ENCODE measurements at regions of chr14 and their contacts with region 1.

Region 1: DNA sequence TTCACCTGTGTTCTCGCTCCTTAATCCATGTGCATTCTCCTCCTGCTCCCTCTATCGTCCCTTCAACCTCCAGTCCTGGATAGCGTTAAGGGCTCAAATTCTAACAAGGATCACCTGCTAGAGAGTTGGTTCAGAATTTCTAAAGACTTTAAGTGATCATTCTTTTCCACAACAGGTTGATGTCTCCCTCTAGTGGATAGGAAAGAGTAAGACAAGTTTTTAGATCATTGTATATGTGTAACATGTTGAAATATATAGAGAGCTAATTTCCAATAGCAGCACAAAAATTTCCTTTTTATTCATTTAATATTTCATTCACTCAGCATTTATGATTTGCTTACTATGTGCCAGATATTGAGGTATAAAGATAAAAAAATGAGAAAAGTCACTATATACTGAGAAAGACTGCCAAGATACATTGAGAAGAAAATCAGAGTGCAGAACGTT is 9.3 kb upstream of the ESR2 start:
- DNase-seq: no peak
- H3K4me3 ChIP-seq: no peak overlapping the region
- H3K27ac ChIP-seq: no peak overlapping the region
- H3K4me1 ChIP-seq: no peaks in the 10 kb centered on the region
- H3K27me3 ChIP-seq: no peaks in the 10 kb centered on the region
- CTCF ChIP-seq: peak; percentile 45 to 85 (median 77)

Region 2: DNA sequence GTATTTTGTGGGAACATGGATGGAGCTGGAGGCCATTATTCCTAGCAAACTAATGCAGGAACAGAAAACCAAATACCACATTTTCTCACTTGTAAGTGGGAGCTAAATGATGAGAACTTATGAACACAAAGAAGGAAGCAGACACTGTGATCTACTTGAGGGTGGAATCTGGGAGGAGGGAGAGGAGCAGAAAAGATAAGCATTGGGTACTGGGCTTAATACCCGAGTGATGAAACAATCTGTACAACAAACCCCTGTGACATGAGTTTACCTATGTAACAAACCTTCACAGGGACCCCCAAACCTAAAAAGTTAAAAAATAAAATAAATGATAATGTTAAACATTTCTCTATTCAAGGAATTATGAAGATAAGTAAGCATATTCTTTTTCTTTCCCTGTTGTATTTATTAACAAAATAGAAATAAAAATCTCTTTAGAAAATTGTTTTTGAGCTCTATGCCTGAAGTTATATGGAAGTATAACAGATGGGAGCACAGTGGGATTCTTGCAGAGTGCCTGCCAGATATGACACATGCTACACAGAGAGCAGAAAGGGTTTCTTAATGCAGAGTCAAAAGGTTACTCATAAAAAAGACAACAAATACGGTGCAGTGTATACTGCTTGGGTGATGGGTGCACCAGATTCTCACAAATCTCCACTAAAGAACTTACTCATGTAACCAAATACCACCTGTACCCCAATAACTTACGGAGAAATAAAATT is 502.7 kb before region 1 on chr14:
- intact Hi-C with region 1: loop called (anchors 2 kb)
- DNase-seq: no peak
- H3K4me3 ChIP-seq: no peak overlapping the region
- H3K27ac ChIP-seq: no peak overlapping the region
- H3K4me1 ChIP-seq: peaks cover 0 to 4% of the 10 kb centered on the region in 2 donors
- H3K27me3 ChIP-seq: no peaks in the 10 kb centered on the region
- CTCF ChIP-seq: no peak

Region 3: DNA sequence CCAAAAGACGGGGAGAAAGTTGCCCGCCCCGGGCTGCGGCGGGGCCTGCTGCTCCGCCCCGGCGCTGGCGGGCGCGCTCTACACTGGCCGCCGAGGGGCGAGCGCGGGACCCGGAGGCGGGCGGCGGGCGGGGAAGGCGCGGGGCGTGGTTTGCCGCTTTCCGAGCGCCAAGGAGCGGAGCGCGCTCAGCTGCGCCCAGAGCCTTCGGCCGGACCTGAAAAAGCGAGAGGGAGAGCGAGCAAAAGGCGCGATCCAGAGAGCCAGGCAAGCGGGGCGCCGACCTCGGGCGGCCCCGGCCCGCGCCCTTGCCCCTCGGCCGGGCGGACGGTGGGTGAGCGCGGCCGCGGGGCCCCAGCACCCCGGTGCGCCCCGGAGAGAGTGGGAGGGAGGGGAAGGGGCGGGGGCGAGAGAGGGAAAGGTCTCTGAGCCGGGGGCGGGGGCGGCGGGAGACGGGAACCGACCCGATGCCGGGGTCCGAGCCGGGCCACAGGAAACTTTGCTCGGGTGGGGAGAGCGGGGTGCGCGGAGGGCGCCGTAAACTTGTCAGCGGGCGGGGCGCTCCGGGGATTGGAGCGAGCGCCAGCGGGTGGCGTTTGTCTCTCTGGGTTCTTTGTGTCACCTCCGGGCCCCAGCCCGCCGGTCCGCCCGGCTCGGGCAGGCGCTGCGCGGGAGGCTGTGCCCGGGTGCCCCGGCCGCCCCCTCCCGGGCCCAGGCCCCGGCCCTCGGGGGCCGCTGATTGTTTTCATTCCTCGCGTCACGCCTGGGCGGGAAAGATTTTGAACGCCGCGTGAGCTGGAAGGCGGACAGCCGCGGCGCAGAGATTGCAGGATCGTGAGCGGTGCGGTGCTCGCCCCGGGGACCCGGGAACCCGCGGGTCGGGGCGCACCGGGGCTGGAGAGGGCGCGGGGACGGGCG is 450.4 kb before region 1 on chr14 and contains the start of gene SYNE2:
- intact Hi-C with region 1: no loop called
- DNase-seq: peak in 1 of 2 donors; percentile 86
- H3K4me3 ChIP-seq: peak within 1 kb of the TSS; percentile 84 to 89
- H3K27ac ChIP-seq: peak within 1 kb of the TSS; percentile 89 to 93
- H3K4me1 ChIP-seq: peaks cover 0 to 12% of the 10 kb centered on the region in 2 donors
- H3K27me3 ChIP-seq: no peaks in the 10 kb centered on the region
- CTCF ChIP-seq: peak in 2 of 3 experiments; percentile 32 to 56
- total RNA-seq, gene SYNE2: 518 TPM

Region 4: GRCh38 chr14:64005822-64006221 is 297.7 kb before region 1 on chr14:
- intact Hi-C with region 1: loop called (anchors 10 kb)
- DNase-seq: no peak
- H3K4me3 ChIP-seq: no peak overlapping the region
- H3K27ac ChIP-seq: no peak overlapping the region
- H3K4me1 ChIP-seq: no peaks in the 10 kb centered on the region
- H3K27me3 ChIP-seq: no peaks in the 10 kb centered on the region
- CTCF ChIP-seq: no peak

Region 5: DNA sequence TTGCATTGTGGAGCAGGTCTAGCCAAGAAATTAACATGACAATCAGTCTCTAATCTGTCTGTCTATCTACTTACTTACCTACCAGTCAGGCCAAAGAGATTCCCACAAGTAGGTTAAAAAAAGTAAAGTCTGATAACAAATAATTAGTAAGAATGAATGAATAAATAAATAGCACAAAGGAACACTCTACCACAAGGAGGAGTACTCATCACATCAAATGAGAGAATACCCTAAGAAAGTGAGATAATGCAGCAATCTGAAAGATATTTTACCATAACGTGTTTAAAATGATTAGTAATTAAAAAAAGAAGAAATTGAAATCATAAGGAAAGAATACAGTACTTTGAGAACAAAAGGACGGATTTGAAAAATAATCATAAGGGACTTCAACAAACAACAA is 263.4 kb before region 1 on chr14:
- intact Hi-C with region 1: loop called (anchors 10 kb)
- DNase-seq: no peak
- H3K4me3 ChIP-seq: no peak overlapping the region
- H3K27ac ChIP-seq: no peak overlapping the region
- H3K4me1 ChIP-seq: peaks cover 0 to 5% of the 10 kb centered on the region in 2 donors
- H3K27me3 ChIP-seq: no peaks in the 10 kb centered on the region
- CTCF ChIP-seq: peak in 2 of 3 experiments; percentile 32 to 43

Region 6: GRCh38 chr14:64159588-64159987 is 143.9 kb before region 1 on chr14:
- intact Hi-C with region 1: loop called (anchors 10 kb)
- DNase-seq: no peak
- H3K4me3 ChIP-seq: no peak overlapping the region
- H3K27ac ChIP-seq: no peak overlapping the region
- H3K4me1 ChIP-seq: no peaks in the 10 kb centered on the region
- H3K27me3 ChIP-seq: no peaks in the 10 kb centered on the region
- CTCF ChIP-seq: no peak